Activated T-helper 1 cell treated with anti-CD3 and anti-CD28 coated beads, Interleukin-12 subunit alpha, Interleukin-12 subunit beta, Interleukin-2, Interleukin-4 antibody, amounts not matched to agents 30 ng/mL and 10 ng/mL and 1 ng/mL, durations not matched to agents 14 hours and 24 hours and 36 hours (primary cell): ENCODE measurements at regions of chr1 and their contacts with region 1.

Region 1: DNA sequence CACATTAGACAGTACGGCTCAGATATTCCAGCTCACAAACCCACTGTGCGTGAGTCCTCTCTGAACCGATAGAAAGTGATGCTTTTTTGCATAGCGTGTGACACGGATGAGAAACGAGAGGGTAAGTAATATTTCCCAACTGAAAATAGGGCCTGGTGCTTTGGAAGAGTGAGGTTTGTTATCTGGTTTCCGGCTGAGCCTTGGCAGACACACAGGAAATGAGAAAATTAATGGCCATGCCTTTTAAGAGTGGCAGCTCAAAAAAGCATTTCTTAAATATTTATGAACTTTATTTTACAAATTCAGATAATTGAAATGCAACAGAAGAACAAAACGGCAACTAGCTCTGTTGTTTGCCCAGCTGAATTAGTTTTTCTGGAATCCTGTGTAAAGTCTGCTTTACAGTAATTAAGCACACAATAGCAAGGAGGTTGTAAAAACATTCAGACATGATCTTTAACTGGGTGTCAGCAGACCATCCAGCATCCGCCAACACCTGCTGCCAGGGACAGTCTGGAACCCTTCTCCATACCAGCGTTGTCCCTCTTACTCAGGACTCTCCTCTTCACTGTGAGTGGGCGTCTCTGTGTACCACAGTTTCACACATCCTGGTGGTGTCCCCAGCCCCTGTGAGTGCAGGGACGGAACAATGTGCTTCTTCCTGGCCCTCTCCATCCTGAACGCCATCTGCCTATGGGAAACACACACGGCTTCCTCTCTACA is 155.4 kb downstream of the PGBD5 start:
- DNase-seq: no peak
- H3K4me3 Mint-ChIP-seq: no peak overlapping the region
- H3K27ac Mint-ChIP-seq: peak overlapping the region; percentile 89
- H3K4me1 Mint-ChIP-seq: peaks cover 28% of the 10 kb centered on the region
- H3K27me3 Mint-ChIP-seq: no peaks in the 10 kb centered on the region

Region 2: GRCh38 chr1:230251644-230252191 is 19.0 kb before region 1 on chr1:
- intact Hi-C with region 1: loop called (anchors 1 kb)
- DNase-seq: no peak
- H3K4me3 Mint-ChIP-seq: no peak overlapping the region
- H3K27ac Mint-ChIP-seq: peak overlapping the region; percentile 76
- H3K4me1 Mint-ChIP-seq: peaks cover 18% of the 10 kb centered on the region
- H3K27me3 Mint-ChIP-seq: no peaks in the 10 kb centered on the region

Region 3: DNA sequence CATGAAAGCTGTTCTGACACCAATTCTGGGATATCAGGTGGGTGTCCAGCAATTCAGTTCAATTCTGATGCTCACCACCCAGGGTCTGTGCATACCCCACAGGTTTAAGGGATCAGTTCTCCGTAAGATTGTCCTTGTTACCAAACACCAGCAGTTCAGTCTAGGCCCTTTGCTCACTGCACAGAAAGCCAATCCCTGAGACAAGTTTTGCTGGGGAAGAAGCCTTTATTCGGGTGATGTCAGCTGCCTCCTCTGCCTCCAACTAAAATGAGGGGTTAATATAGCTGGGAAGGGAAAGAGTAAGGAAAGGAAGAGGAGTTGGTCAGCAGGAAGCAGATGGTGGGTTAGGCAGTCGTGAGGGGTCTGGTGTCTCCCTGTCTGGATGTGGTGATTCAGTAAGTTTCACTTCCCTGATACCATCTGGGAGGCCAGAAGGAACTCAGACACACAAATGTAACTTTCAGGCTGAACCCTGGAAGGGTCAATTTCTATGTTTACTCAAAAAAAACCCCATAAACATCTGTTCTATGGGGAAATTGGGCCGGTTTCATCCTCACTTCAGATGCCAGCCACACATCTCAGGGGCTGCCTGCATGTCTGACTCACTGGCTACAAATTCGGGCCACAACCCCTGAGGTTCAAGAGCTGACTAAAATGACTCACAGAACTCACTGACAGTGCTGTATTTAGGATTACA is 238.7 kb after region 1 on chr1:
- intact Hi-C with region 1: no loop called
- DNase-seq: no peak
- H3K4me3 Mint-ChIP-seq: no peak overlapping the region
- H3K27ac Mint-ChIP-seq: no peak overlapping the region
- H3K4me1 Mint-ChIP-seq: no peaks in the 10 kb centered on the region
- H3K27me3 Mint-ChIP-seq: peaks cover 17% of the 10 kb centered on the region

Region 4: GRCh38 chr1:230681599-230681998 is 410.9 kb after region 1 on chr1:
- intact Hi-C with region 1: no loop called
- DNase-seq: no peak
- H3K4me3 Mint-ChIP-seq: no peak overlapping the region
- H3K27ac Mint-ChIP-seq: no peak overlapping the region
- H3K4me1 Mint-ChIP-seq: no peaks in the 10 kb centered on the region
- H3K27me3 Mint-ChIP-seq: no peaks in the 10 kb centered on the region